ENCODE measurements at regions of chr16 and their contacts with region 1.

Region 1: GRCh38 chr16:16861546-16861945 is 482.6 kb downstream of the NPIPA7 start:
- DNase-seq: no peak
- ATAC-seq: no peak

Region 2: GRCh38 chr16:16908077-16908476 is 46.5 kb after region 1 on chr16:
- intact Hi-C with region 1: no loop called
- DNase-seq: no peak
- ATAC-seq: no peak

Region 3: DNA sequence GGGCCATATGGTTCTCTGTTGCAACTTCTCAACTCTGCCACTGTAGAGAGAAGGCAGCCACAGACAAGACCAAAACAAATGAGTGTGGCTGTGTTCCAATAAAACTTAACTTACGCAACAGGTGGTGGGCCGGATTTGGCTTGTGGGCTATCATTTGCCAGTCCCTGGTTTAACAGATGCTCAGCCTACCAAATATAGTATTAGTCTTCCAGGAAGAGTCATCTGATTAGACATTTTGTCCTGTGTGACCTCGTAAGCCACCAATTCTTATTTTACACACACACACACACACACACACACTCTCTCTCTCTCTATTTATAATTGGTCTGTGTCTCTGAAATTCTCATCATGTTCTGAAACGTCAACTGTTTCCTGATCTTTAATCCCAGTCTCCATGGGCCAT is 363.3 kb after region 1 on chr16:
- intact Hi-C with region 1: loop called (anchors 5 kb)
- DNase-seq: no peak
- ATAC-seq: peak; percentile 92

Region 4: GRCh38 chr16:17277977-17278381 is 416.4 kb after region 1 on chr16:
- intact Hi-C with region 1: loop called (anchors 5 kb)
- DNase-seq: no peak
- ATAC-seq: peak; percentile 56

Region 5: DNA sequence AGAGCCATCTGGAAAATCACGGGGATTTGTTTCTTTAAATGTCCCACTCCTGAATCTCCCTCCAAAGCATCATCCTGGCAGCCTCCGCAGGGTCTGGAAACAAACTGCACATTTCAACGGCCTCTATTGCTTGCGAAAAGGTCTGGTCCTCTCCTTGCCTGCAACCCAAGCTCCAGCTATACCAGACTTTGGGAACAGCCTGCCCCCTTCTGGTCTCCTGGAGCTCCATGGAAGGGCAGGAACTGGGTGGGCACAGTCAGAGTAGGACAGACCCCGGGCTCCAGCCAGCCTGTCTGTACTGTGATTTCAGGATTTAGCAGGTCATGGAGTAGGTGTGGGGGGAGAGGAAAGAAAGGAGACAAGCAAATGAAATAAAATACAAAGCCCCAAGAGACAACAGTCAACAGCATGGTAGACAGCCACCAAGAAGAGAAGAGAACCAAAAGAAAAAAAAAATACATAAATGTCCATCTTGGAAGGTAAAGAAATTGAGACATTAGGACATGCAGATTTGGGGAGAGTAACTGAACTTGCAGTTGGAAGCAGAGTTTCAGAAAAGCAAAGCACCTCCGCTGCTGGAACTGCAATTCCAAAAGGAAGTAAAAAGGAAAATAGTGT is 606.5 kb after region 1 on chr16:
- intact Hi-C with region 1: loop called (anchors 2 kb)
- DNase-seq: peak; percentile 73
- ATAC-seq: peak; percentile 68

Region 6: GRCh38 chr16:17578921-17579874 is 717.7 kb after region 1 on chr16:
- intact Hi-C with region 1: loop called (anchors 1 kb)
- DNase-seq: no peak
- ATAC-seq: peak; percentile 79

Measured in Right ventricle myocardium inferior (tissue), 1 donor.